H1 (cell line): ENCODE measurements at regions of chr12 and their contacts with region 1.

Region 1: GRCh38 chr12:52319097-52319496 is 2.1 kb downstream of the KRT83 start:
- DNase-seq: no peak
- H3K4me3 ChIP-seq: no peak overlapping the region
- H3K27ac ChIP-seq: no peak overlapping the region
- H3K4me1 ChIP-seq: no peaks in the 10 kb centered on the region
- H3K27me3 ChIP-seq: no peaks in the 10 kb centered on the region
- CTCF ChIP-seq: peak; percentile 4 to 40 (median 18)
- EP300 ChIP-seq: no peak
- POLR2A ChIP-seq: no peak
- RAD21 ChIP-seq: peak; percentile 23 to 53; a peak in 3 of 4 replicates

Region 2: GRCh38 chr12:52207895-52208294 is 111.2 kb before region 1 on chr12:
- CTCF ChIA-PET with region 1: interaction called, 10 read pairs
- POLR2A ChIA-PET with region 1: no interaction called
- DNase-seq: no peak
- H3K4me3 ChIP-seq: no peak overlapping the region
- H3K27ac ChIP-seq: no peak overlapping the region
- H3K4me1 ChIP-seq: peaks cover 0 to 7% (median 2%) of the 10 kb centered on the region in 4 experiments; a peak in 3 of 7 replicates
- H3K27me3 ChIP-seq: no peaks in the 10 kb centered on the region
- CTCF ChIP-seq: no peak
- EP300 ChIP-seq: no peak
- POLR2A ChIP-seq: no peak
- RAD21 ChIP-seq: no peak

Region 3: DNA sequence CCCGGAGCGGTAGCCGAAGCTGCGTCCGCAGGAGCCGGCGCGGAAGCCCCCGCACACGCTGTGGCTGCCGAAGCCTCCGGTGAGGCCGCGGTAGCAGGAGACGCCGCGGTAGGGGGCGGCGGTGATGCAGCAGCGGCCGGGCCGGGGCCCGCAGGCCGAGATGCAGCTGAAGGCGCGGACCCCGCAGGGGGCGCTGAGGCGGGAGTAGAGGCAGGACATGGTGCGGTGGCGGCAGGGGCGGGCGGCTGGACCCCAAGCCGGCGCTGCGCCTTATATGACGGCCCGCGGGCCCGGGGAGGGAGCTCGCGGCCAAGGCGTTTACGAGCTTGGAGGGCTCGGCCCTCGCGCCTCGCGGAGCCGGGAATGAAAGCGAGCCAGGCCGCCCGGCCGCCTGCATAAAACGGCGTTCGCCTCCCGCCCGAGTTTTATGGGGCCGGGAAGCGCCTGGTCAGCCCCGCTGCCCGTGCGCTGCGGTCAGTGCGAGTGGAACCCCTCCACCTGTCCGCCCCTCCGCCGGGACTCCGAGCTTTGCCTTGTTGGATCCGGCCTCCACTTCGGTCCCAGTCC is 60.7 kb before region 1 on chr12:
- CTCF ChIA-PET with region 1: interaction called, 11 read pairs
- POLR2A ChIA-PET with region 1: no interaction called
- DNase-seq: peak in 1 of 2 experiments; percentile 75
- H3K4me3 ChIP-seq: peak overlapping the region in 3 of 4 experiments; percentile 7 to 44 (median 26); a peak in 4 of 8 replicates
- H3K27ac ChIP-seq: no peak overlapping the region
- H3K4me1 ChIP-seq: peaks cover 0 to 6% (median under 1%) of the 10 kb centered on the region in 4 experiments; a peak in 3 of 7 replicates
- H3K27me3 ChIP-seq: peaks cover 14 to 44% (median 37%) of the 10 kb centered on the region in 4 experiments
- CTCF ChIP-seq: peak in 1 of 3 experiments; percentile 6; a peak in 1 of 4 replicates
- EP300 ChIP-seq: no peak
- POLR2A ChIP-seq: no peak
- RAD21 ChIP-seq: no peak

Region 4: GRCh38 chr12:52338241-52338960 is 19.3 kb after region 1 on chr12:
- CTCF ChIA-PET with region 1: interaction called, 353 read pairs
- POLR2A ChIA-PET with region 1: no interaction called
- DNase-seq: no peak
- H3K4me3 ChIP-seq: no peak overlapping the region
- H3K27ac ChIP-seq: no peak overlapping the region
- H3K4me1 ChIP-seq: peaks cover 0 to 3% (median 0%) of the 10 kb centered on the region in 4 experiments; a peak in 1 of 7 replicates
- H3K27me3 ChIP-seq: no peaks in the 10 kb centered on the region
- CTCF ChIP-seq: no peak
- EP300 ChIP-seq: no peak
- POLR2A ChIP-seq: no peak
- RAD21 ChIP-seq: no peak

Region 5: GRCh38 chr12:52372216-52373154 is 53.4 kb after region 1 on chr12:
- CTCF ChIA-PET with region 1: interaction called, 10 read pairs
- POLR2A ChIA-PET with region 1: no interaction called
- DNase-seq: peak; percentile 57 to 84
- H3K4me3 ChIP-seq: no peak overlapping the region
- H3K27ac ChIP-seq: no peak overlapping the region
- H3K4me1 ChIP-seq: no peaks in the 10 kb centered on the region
- H3K27me3 ChIP-seq: no peaks in the 10 kb centered on the region
- CTCF ChIP-seq: peak; percentile 79 to 96 (median 94)
- EP300 ChIP-seq: no peak
- POLR2A ChIP-seq: no peak
- RAD21 ChIP-seq: peak; percentile 95 to 97

Region 6: DNA sequence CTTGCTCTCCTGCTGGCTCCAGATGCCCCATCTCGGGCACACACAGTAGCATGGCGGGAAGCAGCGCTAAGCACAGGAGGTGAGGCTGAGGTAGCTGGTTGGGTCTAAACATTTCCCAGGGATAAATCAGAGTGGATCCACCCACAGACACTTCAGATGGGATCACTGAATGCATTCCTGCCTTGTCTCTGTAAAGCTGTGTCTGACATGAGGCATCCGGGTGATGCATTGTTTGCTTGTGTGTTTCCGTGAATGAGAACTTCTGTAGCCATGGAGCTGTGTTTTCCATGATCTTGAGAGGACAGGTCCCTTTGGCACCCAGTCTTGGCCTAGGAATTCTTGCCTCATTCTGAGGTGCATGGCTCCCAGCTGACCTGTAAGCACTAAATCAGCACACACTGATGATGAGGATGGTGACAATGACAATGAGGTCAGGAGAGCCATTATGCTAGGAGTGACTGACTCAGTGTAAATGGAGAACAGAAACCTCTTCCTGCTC is 121.8 kb after region 1 on chr12:
- CTCF ChIA-PET with region 1: no interaction called
- POLR2A ChIA-PET with region 1: no interaction called
- DNase-seq: no peak
- H3K4me3 ChIP-seq: no peak overlapping the region
- H3K27ac ChIP-seq: no peak overlapping the region
- H3K4me1 ChIP-seq: peaks cover 0 to 5% (median 3%) of the 10 kb centered on the region in 4 experiments; a peak in 3 of 7 replicates
- H3K27me3 ChIP-seq: no peaks in the 10 kb centered on the region; a peak in 2 of 7 replicates
- CTCF ChIP-seq: no peak
- EP300 ChIP-seq: no peak
- POLR2A ChIP-seq: no peak
- RAD21 ChIP-seq: no peak